ENCODE measurements at regions of chr3 and their contacts with region 1.

Region 1: GRCh38 chr3:46845791-46846623 is 17.2 kb downstream of the MYL3 start:
- DNase-seq: peak; percentile 27
- H3K4me3 ChIP-seq: peak overlapping the region; percentile 58
- H3K27ac ChIP-seq: peak overlapping the region; percentile 47
- H3K27me3 ChIP-seq: peaks cover 6% of the 10 kb centered on the region
- CTCF ChIP-seq: peak; percentile 49

Region 2: DNA sequence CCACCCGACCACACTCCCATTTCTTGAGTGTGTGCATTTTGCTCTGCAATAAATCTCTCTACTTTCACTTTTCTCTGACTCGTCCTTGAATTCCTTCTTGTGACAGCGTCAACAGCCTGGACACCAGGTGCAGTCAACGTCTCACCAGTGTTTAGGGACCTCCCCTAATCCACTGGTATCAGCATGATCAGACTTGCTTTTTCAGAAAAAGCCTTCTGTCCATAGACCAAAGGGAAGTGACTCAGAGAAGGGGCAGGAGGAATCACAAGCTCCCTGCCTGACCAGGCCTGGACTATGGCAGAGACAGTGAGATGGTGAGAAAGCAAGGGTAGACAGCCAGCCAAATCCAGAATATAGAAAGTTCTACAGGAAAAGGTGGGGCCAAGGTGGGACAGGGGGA is 459.8 kb before region 1 on chr3:
- CTCF ChIA-PET with region 1: no interaction called
- POLR2A ChIA-PET with region 1: no interaction called
- DNase-seq: no peak
- H3K4me3 ChIP-seq: no peak overlapping the region
- H3K27ac ChIP-seq: no peak overlapping the region
- H3K27me3 ChIP-seq: peaks cover 20% of the 10 kb centered on the region
- CTCF ChIP-seq: no peak

Region 3: DNA sequence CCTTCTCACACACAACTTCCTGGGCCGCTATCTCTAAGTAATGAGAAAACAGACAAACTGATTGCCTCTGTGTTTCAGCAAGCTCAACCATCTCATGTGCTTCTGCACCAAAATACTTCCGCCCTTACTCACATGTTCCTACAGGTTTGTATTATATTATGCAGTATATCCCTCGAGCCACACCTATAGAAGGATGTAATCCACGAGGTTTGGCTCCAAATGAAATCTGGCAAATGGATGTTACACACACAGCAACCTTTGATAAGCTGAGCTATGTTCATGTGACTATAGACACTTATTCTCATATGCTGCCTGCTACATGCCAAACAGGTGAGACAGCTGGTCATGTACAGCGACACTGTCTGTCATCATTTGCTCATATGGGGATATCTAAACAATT is 416.3 kb before region 1 on chr3:
- CTCF ChIA-PET with region 1: no interaction called
- POLR2A ChIA-PET with region 1: no interaction called
- DNase-seq: no peak
- H3K4me3 ChIP-seq: no peak overlapping the region
- H3K27ac ChIP-seq: no peak overlapping the region
- H3K27me3 ChIP-seq: peaks cover 11% of the 10 kb centered on the region
- CTCF ChIP-seq: no peak

Region 4: GRCh38 chr3:46705022-46705530 is 140.9 kb before region 1 on chr3:
- CTCF ChIA-PET with region 1: interaction called, 14 read pairs
- POLR2A ChIA-PET with region 1: no interaction called
- DNase-seq: peak; percentile 26
- H3K4me3 ChIP-seq: no peak overlapping the region
- H3K27ac ChIP-seq: no peak overlapping the region
- H3K27me3 ChIP-seq: peaks cover 47% of the 10 kb centered on the region
- CTCF ChIP-seq: peak; percentile 96

Region 5: DNA sequence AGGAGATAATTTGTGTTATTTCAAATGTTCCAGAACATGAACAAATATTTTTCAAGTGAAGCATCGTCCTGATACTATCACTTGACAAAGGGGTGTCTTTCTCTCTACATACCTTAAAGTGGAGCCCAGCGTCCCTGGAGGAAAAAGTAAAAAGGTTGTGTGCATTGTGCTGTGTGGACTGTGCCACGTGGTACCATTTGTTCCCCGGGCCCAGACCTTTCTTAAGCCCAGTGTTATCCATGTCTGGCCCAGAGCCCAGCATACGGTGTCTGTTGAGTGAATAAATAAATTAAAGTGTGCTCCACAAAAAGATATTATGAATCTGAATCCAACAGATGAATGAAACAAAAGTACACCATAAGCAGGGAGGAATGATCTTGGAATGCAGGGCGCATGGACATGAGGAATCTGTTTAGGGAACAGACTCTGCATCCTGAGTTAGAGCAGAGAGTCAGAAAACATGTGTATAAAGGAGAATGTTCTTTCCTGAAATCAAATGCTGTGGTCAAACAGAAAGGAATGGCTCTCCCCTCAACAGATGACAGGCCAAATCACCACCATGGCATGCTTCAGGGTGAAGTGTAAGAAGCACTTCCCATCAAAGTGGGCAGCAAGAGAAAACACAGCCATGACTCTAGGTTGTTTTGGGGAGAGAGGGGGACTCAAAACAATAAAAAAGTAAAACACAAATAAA is 120.2 kb before region 1 on chr3:
- CTCF ChIA-PET with region 1: interaction called, 10 read pairs
- POLR2A ChIA-PET with region 1: interaction called, 3 read pairs
- DNase-seq: no peak
- H3K4me3 ChIP-seq: no peak overlapping the region
- H3K27ac ChIP-seq: no peak overlapping the region
- H3K27me3 ChIP-seq: peaks cover 4% of the 10 kb centered on the region
- CTCF ChIP-seq: no peak

Region 6: GRCh38 chr3:46860017-46860830 is 14.2 kb after region 1 on chr3:
- CTCF ChIA-PET with region 1: interaction called, 19 read pairs
- POLR2A ChIA-PET with region 1: no interaction called
- DNase-seq: no peak
- H3K4me3 ChIP-seq: no peak overlapping the region
- H3K27ac ChIP-seq: no peak overlapping the region
- H3K27me3 ChIP-seq: peaks cover 41% of the 10 kb centered on the region
- CTCF ChIP-seq: peak; percentile 56

Region 7: DNA sequence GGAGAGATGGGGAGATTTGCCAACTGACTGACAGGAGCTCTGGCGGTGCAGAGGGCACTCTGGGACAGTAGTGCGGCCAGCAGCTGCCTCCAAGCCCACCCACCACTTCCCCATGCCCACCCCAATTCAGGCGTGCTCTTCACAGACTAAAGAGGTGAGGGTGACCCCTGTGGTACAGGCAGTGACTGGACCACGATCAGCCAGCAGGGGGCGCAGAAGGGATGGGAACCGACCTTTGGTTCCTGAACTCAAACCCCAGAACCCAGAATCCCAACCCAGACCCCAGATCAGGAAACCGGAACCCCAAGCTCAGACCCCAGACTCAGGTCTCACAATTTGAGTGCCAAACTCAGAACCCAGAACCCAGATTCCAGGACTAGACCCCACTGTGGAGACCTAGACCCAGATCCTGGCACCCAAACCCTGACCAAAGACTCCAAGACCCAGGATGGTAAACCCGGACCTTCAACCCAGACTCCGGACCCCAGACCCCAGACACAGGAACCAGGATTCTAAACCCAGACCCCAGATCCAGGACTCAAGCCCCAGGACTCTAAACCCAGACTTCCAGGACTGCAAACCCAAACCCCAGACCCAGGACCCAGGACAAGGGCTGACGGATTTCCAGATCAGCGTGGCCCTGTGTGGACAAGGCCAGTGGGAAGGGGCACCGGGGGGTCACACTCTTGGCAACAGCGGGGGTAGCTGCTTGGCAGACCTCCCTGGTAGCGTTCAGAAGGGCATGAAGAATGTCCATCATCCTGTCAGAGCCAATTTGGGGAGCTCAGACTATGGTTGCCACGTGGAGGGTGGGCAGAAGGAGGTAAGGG is 20.9 kb after region 1 on chr3:
- CTCF ChIA-PET with region 1: interaction called, 19 read pairs
- POLR2A ChIA-PET with region 1: no interaction called
- DNase-seq: no peak
- H3K4me3 ChIP-seq: no peak overlapping the region
- H3K27ac ChIP-seq: no peak overlapping the region
- H3K27me3 ChIP-seq: peaks cover 46% of the 10 kb centered on the region
- CTCF ChIP-seq: peak; percentile 90